Activated naive CD4-positive, alpha-beta T cell treated with anti-CD3 and anti-CD28 coated beads, Interleukin-2, amount 10 ng/mL, durations not matched to agents 7 days and 5 days (primary cell): ENCODE measurements at regions of chr17 and their contacts with region 1.

Region 1: GRCh38 chr17:2351269-2351668 is 14.0 kb downstream of the SGSM2 start:
- DNase-seq: no peak
- H3K4me3 Mint-ChIP-seq: no peak overlapping the region
- H3K27ac Mint-ChIP-seq: no peak overlapping the region
- H3K4me1 Mint-ChIP-seq: peaks cover 24% of the 10 kb centered on the region
- H3K27me3 Mint-ChIP-seq: no peaks in the 10 kb centered on the region

Region 2: GRCh38 chr17:2336215-2336851 is 14.9 kb before region 1 on chr17 and contains the start of gene TSR1:
- CTCF ChIA-PET with region 1: interaction called, 15 read pairs
- DNase-seq: peak; percentile 94
- H3K4me3 Mint-ChIP-seq: peak within 1 kb of the TSS; percentile 97
- H3K27ac Mint-ChIP-seq: peak within 1 kb of the TSS; percentile 96
- H3K4me1 Mint-ChIP-seq: peaks cover 33% of the 10 kb centered on the region
- H3K27me3 Mint-ChIP-seq: no peaks in the 10 kb centered on the region

Region 3: GRCh38 chr17:2363851-2364762 is 12.8 kb after region 1 on chr17:
- CTCF ChIA-PET with region 1: interaction called, 13 read pairs
- DNase-seq: no peak
- H3K4me3 Mint-ChIP-seq: no peak overlapping the region
- H3K27ac Mint-ChIP-seq: no peak overlapping the region
- H3K4me1 Mint-ChIP-seq: no peaks in the 10 kb centered on the region
- H3K27me3 Mint-ChIP-seq: no peaks in the 10 kb centered on the region

Region 4: GRCh38 chr17:2386400-2387085 is 35.3 kb after region 1 on chr17:
- CTCF ChIA-PET with region 1: interaction called, 12 read pairs
- DNase-seq: no peak
- H3K4me3 Mint-ChIP-seq: no peak overlapping the region
- H3K27ac Mint-ChIP-seq: no peak overlapping the region
- H3K4me1 Mint-ChIP-seq: peaks cover 33% of the 10 kb centered on the region
- H3K27me3 Mint-ChIP-seq: no peaks in the 10 kb centered on the region

Region 5: GRCh38 chr17:2724778-2725164 is 373.5 kb after region 1 on chr17:
- CTCF ChIA-PET with region 1: no interaction called
- DNase-seq: peak; percentile 63
- H3K4me3 Mint-ChIP-seq: peak overlapping the region; percentile 40
- H3K27ac Mint-ChIP-seq: no peak overlapping the region
- H3K4me1 Mint-ChIP-seq: peaks cover 5% of the 10 kb centered on the region
- H3K27me3 Mint-ChIP-seq: peaks cover 80% of the 10 kb centered on the region